Activated CD8-positive, alpha-beta T cell treated with anti-CD3 and anti-CD28 coated beads for 36 hours (primary cell): ENCODE measurements at regions of chr9 and their contacts with region 1.

Region 1: DNA sequence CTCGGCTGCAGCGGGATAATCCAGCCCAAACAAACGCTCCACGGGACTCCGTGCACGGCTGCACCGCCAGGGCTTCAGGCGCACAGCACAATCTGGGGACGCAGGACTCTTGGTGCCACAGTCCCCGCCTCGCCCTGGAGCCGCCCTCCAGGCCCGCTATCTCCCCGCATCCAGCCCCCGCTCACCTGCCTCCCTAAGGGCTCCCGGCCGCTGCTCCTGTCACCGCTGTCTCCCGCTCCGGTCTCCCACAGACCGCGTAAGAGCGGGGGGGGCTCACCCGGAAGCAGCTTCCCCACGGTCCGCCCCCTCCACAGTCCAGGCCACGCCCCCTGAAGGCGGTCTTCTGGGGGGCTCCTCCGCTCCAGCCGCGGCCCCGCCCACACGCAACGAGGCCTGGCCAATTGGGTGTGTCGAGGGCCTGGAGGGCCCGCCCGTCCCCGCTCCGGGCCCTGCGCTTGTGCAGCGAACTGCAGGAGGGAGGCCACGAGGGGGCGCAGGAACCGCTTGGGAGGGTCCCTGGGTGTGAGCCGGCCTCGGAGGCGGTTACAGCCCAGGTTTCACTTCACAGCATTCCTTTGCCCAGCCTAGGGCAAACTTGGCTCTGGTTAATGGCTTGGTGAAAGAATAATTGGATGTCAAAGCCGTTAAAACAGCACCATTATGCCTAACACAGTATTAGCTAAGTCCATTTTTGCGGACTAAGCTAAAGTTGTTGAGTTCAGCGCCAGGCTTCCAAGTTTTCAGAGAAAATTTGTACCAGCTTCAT is at the start of gene ALAD:
- DNase-seq: peak; percentile 99
- ATAC-seq: peak; percentile 100
- H3K4me3 Mint-ChIP-seq: peak within 1 kb of the TSS; percentile 91
- H3K27ac Mint-ChIP-seq: peak within 1 kb of the TSS; percentile 81
- H3K4me1 Mint-ChIP-seq: peaks cover 12% of the 10 kb centered on the region
- H3K27me3 Mint-ChIP-seq: no peaks in the 10 kb centered on the region
- CTCF ChIP-seq: peak; percentile 99
- total RNA-seq, gene ALAD: 16.2 to 16.3 TPM

Region 2: GRCh38 chr9:113309204-113309813 is 91.9 kb before region 1 on chr9:
- CTCF ChIA-PET with region 1: interaction called, 17 read pairs
- POLR2A ChIA-PET with region 1: interaction called, 3 read pairs
- intact Hi-C with region 1: no loop called
- DNase-seq: peak; percentile 50
- ATAC-seq: peak; percentile 56
- H3K4me3 Mint-ChIP-seq: no peak overlapping the region
- H3K27ac Mint-ChIP-seq: no peak overlapping the region
- H3K4me1 Mint-ChIP-seq: no peaks in the 10 kb centered on the region
- H3K27me3 Mint-ChIP-seq: no peaks in the 10 kb centered on the region
- CTCF ChIP-seq: peak; percentile 79

Region 3: DNA sequence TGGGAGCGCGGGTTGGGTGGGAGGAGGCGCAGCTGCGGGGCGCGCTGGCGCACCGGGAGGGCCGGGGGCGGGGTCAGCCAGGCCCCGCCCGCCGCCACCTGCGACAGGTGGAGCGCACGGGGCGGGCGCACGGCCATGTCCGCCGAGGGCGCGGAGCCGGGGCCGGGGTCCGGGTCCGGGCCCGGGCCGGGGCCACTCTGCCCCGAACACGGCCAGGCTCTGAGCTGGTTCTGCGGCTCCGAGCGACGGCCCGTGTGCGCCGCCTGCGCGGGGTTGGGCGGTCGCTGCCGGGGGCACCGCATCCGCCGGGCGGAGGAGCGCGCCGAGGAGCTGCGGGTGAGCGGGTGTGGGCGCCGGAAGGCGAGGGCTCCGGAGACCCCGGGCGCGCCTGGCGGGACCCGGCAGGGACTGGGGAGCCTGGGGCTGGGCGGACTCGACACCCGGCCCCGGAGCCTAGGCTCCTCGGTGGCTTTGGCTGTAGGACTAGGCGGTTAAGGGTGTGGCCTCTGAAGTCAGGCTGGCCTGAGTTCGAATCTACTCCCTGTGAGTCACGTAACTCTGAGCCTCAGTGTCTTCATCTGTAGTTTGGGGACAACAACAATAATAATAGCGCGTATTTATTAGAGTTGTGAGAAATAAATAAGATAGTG is 51.6 kb before region 1 on chr9 and contains the start of gene BSPRY:
- CTCF ChIA-PET with region 1: interaction called, 14 read pairs
- POLR2A ChIA-PET with region 1: interaction called, 4 read pairs
- intact Hi-C with region 1: no loop called
- DNase-seq: peak; percentile 50
- ATAC-seq: peak; percentile 45
- H3K4me3 Mint-ChIP-seq: peak within 1 kb of the TSS; percentile 78
- H3K27ac Mint-ChIP-seq: peak within 1 kb of the TSS; percentile 77
- H3K4me1 Mint-ChIP-seq: peaks cover 39% of the 10 kb centered on the region
- H3K27me3 Mint-ChIP-seq: peaks cover 13% of the 10 kb centered on the region
- CTCF ChIP-seq: no peak
- total RNA-seq, gene BSPRY: 8.2 to 9.1 TPM

Region 4: GRCh38 chr9:113387560-113388230 is 13.5 kb before region 1 on chr9:
- CTCF ChIA-PET with region 1: interaction called, 17 read pairs
- POLR2A ChIA-PET with region 1: no interaction called
- intact Hi-C with region 1: no loop called
- DNase-seq: no peak
- ATAC-seq: no peak
- H3K4me3 Mint-ChIP-seq: no peak overlapping the region
- H3K27ac Mint-ChIP-seq: no peak overlapping the region
- H3K4me1 Mint-ChIP-seq: no peaks in the 10 kb centered on the region
- H3K27me3 Mint-ChIP-seq: no peaks in the 10 kb centered on the region
- CTCF ChIP-seq: no peak

Region 5: DNA sequence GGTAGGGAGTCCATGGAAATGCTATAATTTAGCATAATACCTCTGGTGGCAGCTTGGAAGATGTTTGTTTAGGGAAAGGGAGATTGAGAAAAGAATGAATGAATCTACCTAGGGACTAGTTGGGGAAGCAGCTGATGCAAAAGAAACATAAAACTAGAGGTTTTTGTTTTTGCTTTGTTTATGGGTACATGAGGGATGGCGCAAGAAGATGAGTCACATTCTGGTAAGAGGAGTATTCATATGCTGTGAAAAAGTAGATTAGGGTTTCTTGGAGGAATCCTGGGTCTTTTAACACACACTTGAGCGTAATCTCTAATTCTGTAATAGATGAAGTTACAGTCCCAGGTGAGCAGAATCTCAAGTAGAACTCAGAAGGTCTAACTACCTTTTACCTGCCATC is 26.4 kb after region 1 on chr9:
- CTCF ChIA-PET with region 1: no interaction called
- POLR2A ChIA-PET with region 1: no interaction called
- intact Hi-C with region 1: no loop called
- DNase-seq: no peak
- ATAC-seq: no peak
- H3K4me3 Mint-ChIP-seq: no peak overlapping the region
- H3K27ac Mint-ChIP-seq: no peak overlapping the region
- H3K4me1 Mint-ChIP-seq: no peaks in the 10 kb centered on the region
- H3K27me3 Mint-ChIP-seq: peaks cover 2% of the 10 kb centered on the region
- CTCF ChIP-seq: no peak

Region 6: DNA sequence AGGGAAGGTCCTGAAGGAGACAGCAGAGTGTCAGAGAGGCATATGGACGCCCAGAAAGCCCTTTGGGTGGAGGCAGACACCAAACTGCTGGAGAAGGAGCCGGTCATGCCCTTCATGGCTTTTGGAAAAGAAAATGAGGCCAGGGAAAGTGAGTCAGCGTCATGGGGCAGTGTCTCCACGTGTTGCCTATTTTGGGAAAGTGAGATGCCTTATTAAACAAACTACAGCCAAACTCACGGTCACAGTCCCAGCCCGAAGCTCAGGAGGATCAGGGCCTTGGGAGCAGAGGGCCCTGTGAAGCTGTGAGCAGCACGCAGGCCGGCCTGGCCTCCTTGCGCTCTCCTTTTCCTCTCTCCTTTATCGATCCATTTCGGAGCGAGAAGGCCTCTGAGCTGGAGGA is 87.3 kb after region 1 on chr9:
- CTCF ChIA-PET with region 1: no interaction called
- POLR2A ChIA-PET with region 1: no interaction called
- intact Hi-C with region 1: no loop called
- DNase-seq: no peak
- ATAC-seq: no peak
- H3K4me3 Mint-ChIP-seq: no peak overlapping the region
- H3K27ac Mint-ChIP-seq: no peak overlapping the region
- H3K4me1 Mint-ChIP-seq: no peaks in the 10 kb centered on the region
- H3K27me3 Mint-ChIP-seq: no peaks in the 10 kb centered on the region
- CTCF ChIP-seq: no peak

Region 7: DNA sequence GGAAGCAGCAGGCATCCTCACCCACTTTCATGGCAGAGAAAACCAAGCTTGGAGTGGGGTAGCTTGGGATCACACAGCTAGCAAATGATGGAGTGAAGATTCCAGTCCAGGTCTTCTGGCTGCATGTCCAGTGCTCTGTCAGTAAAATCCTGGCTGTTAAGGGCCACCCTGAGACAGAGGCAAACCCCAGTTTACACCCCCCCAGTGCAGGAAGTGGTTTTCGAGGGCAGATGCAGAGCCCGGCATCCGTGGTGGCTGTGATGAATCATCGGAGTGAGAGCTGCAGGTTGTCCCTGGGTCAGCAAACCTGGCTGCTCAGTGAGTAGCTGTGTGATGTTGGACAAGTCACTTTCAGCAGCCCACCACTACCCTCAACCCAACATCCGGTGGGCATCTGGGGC is 177.7 kb after region 1 on chr9:
- CTCF ChIA-PET with region 1: interaction called, 18 read pairs
- POLR2A ChIA-PET with region 1: interaction called, 3 read pairs
- intact Hi-C with region 1: no loop called
- DNase-seq: peak; percentile 96
- ATAC-seq: peak; percentile 71
- H3K4me3 Mint-ChIP-seq: peak overlapping the region; percentile 85
- H3K27ac Mint-ChIP-seq: peak overlapping the region; percentile 95
- H3K4me1 Mint-ChIP-seq: peaks cover 83% of the 10 kb centered on the region
- H3K27me3 Mint-ChIP-seq: no peaks in the 10 kb centered on the region
- CTCF ChIP-seq: no peak